ENCODE measurements at regions of chr7 and their contacts with region 1.

Region 1: GRCh38 chr7:105268511-105269392 is 120.0 kb downstream of the SRPK2 start:
- DNase-seq: no peak
- H3K4me3 Mint-ChIP-seq: peak overlapping the region; percentile 74
- H3K27ac Mint-ChIP-seq: peak overlapping the region; percentile 79
- H3K4me1 Mint-ChIP-seq: peaks cover 52% of the 10 kb centered on the region
- H3K27me3 Mint-ChIP-seq: no peaks in the 10 kb centered on the region

Region 2: DNA sequence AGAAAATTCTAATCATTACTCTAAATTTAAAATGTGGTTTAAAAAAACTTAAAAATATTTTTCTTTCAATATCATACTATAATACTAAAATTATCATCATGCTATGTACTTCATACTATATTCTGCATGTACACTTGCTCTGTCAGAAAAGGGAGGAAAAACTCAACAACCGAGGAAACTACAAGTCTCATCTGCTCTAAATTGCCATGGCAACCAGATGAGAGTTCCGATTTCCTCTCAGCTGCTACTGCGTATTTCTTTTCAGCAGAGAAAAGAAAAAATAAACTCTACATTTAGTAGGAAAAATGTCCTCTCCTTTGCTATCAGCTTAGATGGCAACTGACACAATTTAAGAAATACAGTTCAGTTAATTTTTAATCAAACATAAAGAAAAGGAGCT is 58.9 kb before region 1 on chr7:
- CTCF ChIA-PET with region 1: no interaction called
- POLR2A ChIA-PET with region 1: no interaction called
- intact Hi-C with region 1: loop called (anchors 1 kb)
- DNase-seq: no peak
- H3K4me3 Mint-ChIP-seq: no peak overlapping the region
- H3K27ac Mint-ChIP-seq: no peak overlapping the region
- H3K4me1 Mint-ChIP-seq: peaks cover 73% of the 10 kb centered on the region
- H3K27me3 Mint-ChIP-seq: no peaks in the 10 kb centered on the region

Region 3: GRCh38 chr7:105315357-105315756 is 46.6 kb after region 1 on chr7:
- CTCF ChIA-PET with region 1: no interaction called
- POLR2A ChIA-PET with region 1: no interaction called
- intact Hi-C with region 1: no loop called
- DNase-seq: no peak
- H3K4me3 Mint-ChIP-seq: no peak overlapping the region
- H3K27ac Mint-ChIP-seq: no peak overlapping the region
- H3K4me1 Mint-ChIP-seq: peaks cover 41% of the 10 kb centered on the region
- H3K27me3 Mint-ChIP-seq: no peaks in the 10 kb centered on the region

Region 4: DNA sequence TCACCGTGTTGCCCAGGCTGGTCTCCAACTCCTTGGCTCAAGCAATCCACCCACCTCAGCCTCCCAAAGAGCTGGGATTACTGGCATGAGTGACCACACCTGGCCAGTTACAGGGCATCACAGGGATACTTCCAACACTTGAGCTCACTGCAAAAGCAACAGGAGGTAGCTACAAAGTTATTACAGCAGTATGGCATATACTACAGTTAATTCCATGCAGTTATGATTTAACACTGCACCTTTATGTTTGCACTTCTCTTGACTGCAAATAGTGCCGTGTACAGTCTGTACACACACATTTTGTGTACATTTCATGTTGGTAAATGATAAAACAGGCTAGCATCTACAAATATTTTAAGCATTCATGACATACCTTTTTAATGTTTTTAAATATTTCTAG is 98.7 kb after region 1 on chr7:
- CTCF ChIA-PET with region 1: no interaction called
- POLR2A ChIA-PET with region 1: no interaction called
- intact Hi-C with region 1: no loop called
- DNase-seq: no peak
- H3K4me3 Mint-ChIP-seq: no peak overlapping the region
- H3K27ac Mint-ChIP-seq: no peak overlapping the region
- H3K4me1 Mint-ChIP-seq: peaks cover 17% of the 10 kb centered on the region
- H3K27me3 Mint-ChIP-seq: no peaks in the 10 kb centered on the region

Region 5: GRCh38 chr7:106273009-106273668 is 1004.4 kb after region 1 on chr7:
- CTCF ChIA-PET with region 1: no interaction called
- POLR2A ChIA-PET with region 1: no interaction called
- intact Hi-C with region 1: no loop called
- DNase-seq: no peak
- H3K4me3 Mint-ChIP-seq: no peak overlapping the region
- H3K27ac Mint-ChIP-seq: peak overlapping the region; percentile 13
- H3K4me1 Mint-ChIP-seq: peaks cover 35% of the 10 kb centered on the region
- H3K27me3 Mint-ChIP-seq: no peaks in the 10 kb centered on the region